Calu3 (cell line): ENCODE measurements at regions of chr1 and their contacts with region 1.

Region 1: DNA sequence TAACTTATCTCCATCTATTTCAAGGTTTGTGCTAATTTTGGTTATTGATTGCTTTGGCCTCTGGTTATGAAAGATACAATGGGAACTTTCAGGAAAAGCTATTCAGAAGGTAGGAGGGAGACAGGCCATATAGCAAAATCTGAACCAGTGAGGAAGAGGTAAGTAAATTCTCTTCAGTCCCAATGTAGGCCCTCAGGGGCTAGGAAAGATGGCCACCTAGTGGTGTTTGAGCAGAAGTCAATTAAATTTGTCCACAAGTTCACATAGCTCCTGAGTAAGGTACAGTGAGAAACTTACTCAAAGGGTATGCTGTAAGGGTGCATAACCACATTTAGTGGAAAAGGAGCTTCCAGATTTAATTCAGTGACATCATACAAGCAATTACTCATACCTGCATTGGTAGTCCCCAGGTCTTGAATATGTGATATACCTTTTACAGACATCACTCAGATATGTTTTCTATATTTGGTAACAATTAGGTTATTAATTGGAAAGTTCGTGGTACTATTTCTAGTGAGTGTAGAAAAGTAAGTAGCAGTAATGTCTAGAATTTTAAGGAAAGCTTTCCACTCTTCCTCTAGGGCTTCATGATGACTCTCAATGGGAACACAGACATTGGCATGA is 21.4 kb upstream of the FMO1 start:
- DNase-seq: peak; percentile 62
- H3K4me3 Mint-ChIP-seq: no peak overlapping the region
- H3K27ac Mint-ChIP-seq: no peak overlapping the region
- H3K4me1 Mint-ChIP-seq: no peaks in the 10 kb centered on the region
- H3K27me3 Mint-ChIP-seq: no peaks in the 10 kb centered on the region
- CTCF ChIP-seq: peak; percentile 84

Region 2: GRCh38 chr1:170967042-170967910 is 259.6 kb before region 1 on chr1:
- CTCF ChIA-PET with region 1: interaction called, 27 read pairs
- intact Hi-C with region 1: loop called (anchors 1 kb)
- DNase-seq: peak; percentile 18
- H3K4me3 Mint-ChIP-seq: no peak overlapping the region
- H3K27ac Mint-ChIP-seq: no peak overlapping the region
- H3K4me1 Mint-ChIP-seq: no peaks in the 10 kb centered on the region
- H3K27me3 Mint-ChIP-seq: peaks cover 11% of the 10 kb centered on the region
- CTCF ChIP-seq: peak; percentile 46

Region 3: GRCh38 chr1:171055966-171056643 is 170.8 kb before region 1 on chr1:
- CTCF ChIA-PET with region 1: no interaction called
- intact Hi-C with region 1: no loop called
- DNase-seq: no peak
- H3K4me3 Mint-ChIP-seq: no peak overlapping the region
- H3K27ac Mint-ChIP-seq: no peak overlapping the region
- H3K4me1 Mint-ChIP-seq: no peaks in the 10 kb centered on the region
- H3K27me3 Mint-ChIP-seq: no peaks in the 10 kb centered on the region
- CTCF ChIP-seq: no peak

Region 4: DNA sequence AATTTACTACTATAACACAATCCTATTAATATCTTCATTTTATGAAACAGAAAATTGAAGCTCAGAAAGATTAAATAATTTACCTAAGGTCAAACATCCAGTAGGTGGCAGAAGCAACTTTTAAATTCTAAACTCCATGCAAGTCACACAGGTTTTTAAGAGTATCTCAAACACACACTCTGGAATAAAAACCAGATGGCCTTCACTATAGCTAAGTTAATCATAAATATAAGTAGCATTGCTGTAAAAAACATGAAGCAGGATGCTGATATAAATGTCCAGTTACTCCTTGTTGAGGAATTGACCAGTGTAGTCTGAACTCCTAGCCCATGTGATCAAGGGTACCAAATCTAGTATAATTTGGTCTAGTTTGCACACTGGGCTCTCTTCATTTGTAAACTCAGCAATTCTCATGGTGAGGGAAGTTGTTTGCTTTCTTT is 145.5 kb before region 1 on chr1:
- CTCF ChIA-PET with region 1: interaction called, 24 read pairs
- intact Hi-C with region 1: loop called (anchors 1 kb)
- DNase-seq: no peak
- H3K4me3 Mint-ChIP-seq: no peak overlapping the region
- H3K27ac Mint-ChIP-seq: no peak overlapping the region
- H3K4me1 Mint-ChIP-seq: no peaks in the 10 kb centered on the region
- H3K27me3 Mint-ChIP-seq: peaks cover 14% of the 10 kb centered on the region
- CTCF ChIP-seq: no peak